ENCODE measurements at regions of chr5 and their contacts with region 1.

Region 1: DNA sequence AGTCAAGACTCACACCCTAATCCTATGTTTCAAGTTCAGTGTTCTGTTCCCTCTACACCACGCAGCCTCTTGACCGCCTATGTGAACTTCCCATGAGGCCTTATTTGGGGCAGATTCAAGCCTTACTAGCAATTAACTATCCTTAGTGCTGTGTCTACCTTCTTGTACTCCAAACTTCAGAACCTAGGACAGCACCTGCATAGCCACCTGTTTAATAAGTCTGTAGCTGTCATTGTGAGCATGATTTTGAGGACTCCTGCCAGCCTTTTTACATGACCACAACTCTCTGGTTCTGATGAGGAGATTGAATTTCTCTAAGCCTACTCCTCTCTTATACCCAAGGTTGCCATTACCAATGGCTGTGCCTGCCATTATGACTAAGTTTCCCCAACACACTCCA is 50.8 kb upstream of the PCSK1 start:
- DNase-seq: peak; percentile 12
- ATAC-seq: no peak
- H3K4me3 ChIP-seq: no peak overlapping the region
- H3K27ac ChIP-seq: no peak overlapping the region
- H3K4me1 ChIP-seq: no peaks in the 10 kb centered on the region
- H3K27me3 ChIP-seq: peaks cover 40% of the 10 kb centered on the region; the same call in 1 of the 2 replicates
- CTCF ChIP-seq: no peak
- POLR2A ChIP-seq: no peak
- RAD21 ChIP-seq: no peak

Region 2: GRCh38 chr5:96324708-96325107 is 159.2 kb before region 1 on chr5:
- CTCF ChIA-PET with region 1: no interaction called
- POLR2A ChIA-PET with region 1: no interaction called
- RAD21 ChIA-PET with region 1: no interaction called
- intact Hi-C with region 1: no loop called
- DNase-seq: peak; percentile 56
- ATAC-seq: peak; percentile 73
- H3K4me3 ChIP-seq: no peak overlapping the region
- H3K27ac ChIP-seq: no peak overlapping the region
- H3K4me1 ChIP-seq: peaks cover 10 to 28% of the 10 kb centered on the region in 2 experiments
- H3K27me3 ChIP-seq: no peaks in the 10 kb centered on the region
- CTCF ChIP-seq: no peak
- POLR2A ChIP-seq: no peak
- RAD21 ChIP-seq: peak; percentile 13; the same call in 1 of the 2 replicates

Region 3: GRCh38 chr5:96402500-96402899 is 81.4 kb before region 1 on chr5:
- CTCF ChIA-PET with region 1: no interaction called
- POLR2A ChIA-PET with region 1: no interaction called
- RAD21 ChIA-PET with region 1: no interaction called
- intact Hi-C with region 1: no loop called
- DNase-seq: no peak
- ATAC-seq: no peak
- H3K4me3 ChIP-seq: no peak overlapping the region
- H3K27ac ChIP-seq: no peak overlapping the region
- H3K4me1 ChIP-seq: no peaks in the 10 kb centered on the region
- H3K27me3 ChIP-seq: peaks cover 21% of the 10 kb centered on the region
- CTCF ChIP-seq: no peak
- POLR2A ChIP-seq: no peak
- RAD21 ChIP-seq: no peak

Region 4: DNA sequence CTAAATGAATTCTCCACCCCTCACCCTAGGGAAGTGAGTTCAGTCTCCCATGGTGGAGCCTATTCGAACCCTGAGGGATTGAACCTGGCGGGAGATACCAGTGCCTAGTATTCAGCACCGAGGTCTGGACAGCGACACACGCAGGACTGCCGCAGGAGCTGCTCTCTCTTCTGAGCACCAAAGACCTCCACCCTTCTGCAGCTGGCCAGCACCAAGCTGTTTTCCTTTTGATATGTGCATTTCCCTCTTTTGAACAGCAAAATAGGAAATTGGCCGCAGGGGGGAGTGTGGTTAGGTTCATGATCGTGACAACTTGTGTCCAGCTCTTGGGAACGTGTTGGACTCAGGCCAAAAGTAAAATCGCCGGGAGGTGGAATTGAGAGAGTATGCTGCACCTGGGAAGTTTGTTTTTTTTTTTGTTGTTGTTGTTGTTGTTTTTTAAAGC is 49.7 kb before region 1 on chr5:
- CTCF ChIA-PET with region 1: no interaction called
- POLR2A ChIA-PET with region 1: no interaction called
- RAD21 ChIA-PET with region 1: no interaction called
- intact Hi-C with region 1: loop called (anchors 1 kb)
- DNase-seq: peak; percentile 7
- ATAC-seq: peak; percentile 68; the same call in 1 of the 2 replicates
- H3K4me3 ChIP-seq: no peak overlapping the region
- H3K27ac ChIP-seq: no peak overlapping the region
- H3K4me1 ChIP-seq: peaks cover 0 to 4% of the 10 kb centered on the region in 2 experiments; a peak in 2 of 4 replicates
- H3K27me3 ChIP-seq: peaks cover 44% of the 10 kb centered on the region
- CTCF ChIP-seq: no peak
- POLR2A ChIP-seq: no peak
- RAD21 ChIP-seq: 0 out of 2 replicates have a peak, but pooled peaks have one; percentile 4

Region 5: DNA sequence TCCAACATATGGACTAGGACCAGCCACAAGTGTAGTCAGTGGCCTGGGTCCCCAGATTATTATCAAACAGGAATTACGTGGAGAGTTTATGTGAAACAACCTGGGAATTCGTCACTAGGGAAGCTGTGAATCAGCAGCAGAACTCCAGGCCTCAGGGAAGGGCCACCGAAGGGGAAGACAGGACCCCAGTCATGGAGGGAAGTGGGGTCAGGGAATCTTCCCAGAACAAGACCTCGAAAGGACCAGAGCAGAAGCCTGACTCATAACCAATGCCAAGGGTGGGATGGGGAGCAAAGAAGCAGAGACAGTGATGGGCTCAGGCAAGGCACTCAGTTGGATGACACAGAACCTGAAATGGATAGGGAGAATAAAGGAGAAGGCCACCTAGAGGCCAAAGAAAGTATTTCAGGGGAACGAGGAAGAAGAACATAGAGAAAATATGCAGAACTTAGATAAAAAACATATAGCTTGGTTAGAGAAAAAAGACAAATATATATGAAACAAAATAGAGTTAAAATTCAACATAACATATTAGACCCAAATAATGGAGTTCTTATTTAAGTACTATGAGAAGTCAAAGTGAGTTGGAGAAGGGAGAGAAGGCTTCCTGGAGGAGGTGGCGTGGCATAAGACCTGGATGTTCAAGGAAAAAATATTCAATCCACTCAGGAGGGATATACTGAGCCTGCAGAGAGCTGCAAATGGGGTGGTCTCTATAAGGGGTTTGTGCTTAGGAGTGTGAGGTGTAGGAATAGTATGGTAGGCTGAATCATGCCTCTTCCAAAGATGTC is 111.6 kb after region 1 on chr5:
- CTCF ChIA-PET with region 1: no interaction called
- POLR2A ChIA-PET with region 1: no interaction called
- RAD21 ChIA-PET with region 1: no interaction called
- intact Hi-C with region 1: no loop called
- DNase-seq: no peak
- ATAC-seq: peak; percentile 78
- H3K4me3 ChIP-seq: no peak overlapping the region
- H3K27ac ChIP-seq: no peak overlapping the region
- H3K4me1 ChIP-seq: no peaks in the 10 kb centered on the region
- H3K27me3 ChIP-seq: 0 out of 2 replicates have a peak, but pooled peaks cover 4% of the 10 kb centered on the region
- CTCF ChIP-seq: peak; percentile 29 to 77 (median 57); a peak in 4 of 6 replicates
- POLR2A ChIP-seq: no peak
- RAD21 ChIP-seq: peak; percentile 34; the same call in 1 of the 2 replicates

Measured in HCT116 (cell line).